ENCODE measurements at regions of chr7 and their contacts with region 1.

Region 1: DNA sequence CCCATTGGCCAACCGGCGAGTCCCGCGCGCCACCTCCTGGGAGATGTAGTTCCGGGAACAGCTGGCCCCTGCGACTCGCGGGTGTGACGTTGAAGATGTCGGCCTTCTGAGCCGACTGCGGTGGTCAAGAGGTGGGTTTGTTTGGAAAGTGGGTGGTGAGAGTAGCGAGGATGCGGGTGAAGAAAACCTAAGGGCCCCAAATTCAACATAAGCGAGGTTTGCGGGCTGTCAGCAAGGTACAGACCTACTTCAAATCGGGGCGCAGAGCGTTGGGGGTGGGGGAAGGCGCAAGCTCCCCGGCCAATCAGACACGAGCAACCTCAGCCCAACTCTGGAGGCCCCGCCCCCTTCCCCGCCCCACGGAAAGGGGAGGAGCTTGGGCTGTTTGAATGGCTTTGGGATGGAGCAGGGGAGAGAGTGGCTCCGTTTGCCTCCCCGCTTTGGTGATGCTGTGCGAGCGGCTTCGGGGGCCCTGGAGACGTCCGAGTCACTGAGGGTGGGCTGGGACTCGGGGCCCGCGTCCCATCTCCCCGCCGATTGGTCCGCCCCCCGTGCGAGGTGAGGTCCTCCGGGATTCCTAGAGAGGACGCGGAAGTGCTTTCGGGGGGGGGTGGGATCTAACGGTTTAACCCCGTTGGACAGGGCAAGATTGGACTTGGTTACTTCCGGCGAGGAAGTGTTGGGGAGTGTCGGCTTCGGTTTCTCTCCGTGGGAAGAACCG is at the start of gene ZKSCAN5:
- DNase-seq: peak; percentile 97
- H3K4me3 Mint-ChIP-seq: peak within 1 kb of the TSS; percentile 88
- H3K27ac Mint-ChIP-seq: peak within 1 kb of the TSS; percentile 96
- H3K4me1 Mint-ChIP-seq: peaks cover 33% of the 10 kb centered on the region
- H3K27me3 Mint-ChIP-seq: no peaks in the 10 kb centered on the region
- total RNA-seq, gene ZKSCAN5: 12.0 to 12.2 TPM

Region 2: DNA sequence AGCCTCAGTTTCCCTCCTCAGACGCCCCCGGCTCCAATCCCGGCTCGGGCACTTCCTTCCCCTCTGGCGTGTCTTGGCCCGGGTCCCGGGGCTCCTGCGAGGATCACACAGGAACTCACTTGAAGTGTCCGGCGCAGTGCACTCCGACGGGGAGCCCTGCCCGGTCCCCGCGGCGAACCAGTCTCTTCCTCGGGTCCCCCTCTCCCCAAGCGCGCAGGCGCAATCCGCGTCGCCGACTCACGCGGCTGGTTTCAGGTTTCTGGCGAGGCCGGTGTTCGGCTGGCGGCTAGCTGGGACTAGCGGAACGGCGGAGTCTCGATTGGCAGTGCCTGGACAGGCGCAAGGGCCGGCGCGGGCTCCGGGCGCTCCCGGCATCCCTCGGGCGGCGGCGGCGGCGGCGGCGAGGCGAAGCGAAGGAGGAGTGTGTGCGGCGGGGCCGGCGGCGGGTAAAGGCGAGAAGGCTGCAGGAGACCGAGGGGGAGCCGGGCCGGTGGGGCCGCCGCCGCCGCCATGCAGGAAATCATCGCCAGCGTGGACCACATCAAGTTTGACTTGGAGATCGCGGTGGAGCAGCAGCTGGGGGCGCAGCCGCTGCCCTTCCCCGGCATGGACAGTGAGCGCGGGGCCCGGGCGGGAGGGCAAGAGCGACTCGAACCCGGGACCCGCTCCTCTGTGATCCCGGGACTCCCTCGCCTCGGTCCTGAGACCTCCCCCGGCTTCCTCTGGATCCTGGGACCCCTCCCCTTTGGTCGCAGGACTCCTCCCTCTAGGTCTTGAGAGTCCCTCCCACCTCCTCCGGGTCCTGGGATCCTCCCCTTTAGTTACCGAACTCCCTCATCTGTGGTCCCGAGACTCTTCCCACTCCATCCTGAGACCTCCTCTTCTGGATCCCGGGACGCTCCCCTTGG is 65.9 kb before region 1 on chr7 and contains the starts of genes CPSF4 and PTCD1:
- CTCF ChIA-PET with region 1: no interaction called
- POLR2A ChIA-PET with region 1: interaction called, 12 read pairs
- DNase-seq: peak; percentile 92
- H3K4me3 Mint-ChIP-seq: peak within 1 kb of the TSS; percentile 98
- H3K27ac Mint-ChIP-seq: peak within 1 kb of the TSS; percentile 86
- H3K4me1 Mint-ChIP-seq: peaks cover 45% of the 10 kb centered on the region
- H3K27me3 Mint-ChIP-seq: no peaks in the 10 kb centered on the region
- total RNA-seq, gene CPSF4: 64.1 to 66.2 TPM
- total RNA-seq, gene PTCD1: 6.6 to 7.5 TPM

Region 3: GRCh38 chr7:99472561-99473243 is 32.1 kb before region 1 on chr7 and contains the start of gene ZNF789:
- CTCF ChIA-PET with region 1: interaction called, 7 read pairs
- POLR2A ChIA-PET with region 1: interaction called, 23 read pairs
- DNase-seq: peak; percentile 99
- H3K4me3 Mint-ChIP-seq: peak within 1 kb of the TSS; percentile 93
- H3K27ac Mint-ChIP-seq: peak within 1 kb of the TSS; percentile 88
- H3K4me1 Mint-ChIP-seq: peaks cover 39% of the 10 kb centered on the region
- H3K27me3 Mint-ChIP-seq: peaks cover 4% of the 10 kb centered on the region
- total RNA-seq, gene ZNF789: 19.4 to 21.8 TPM

Region 4: GRCh38 chr7:99616359-99617191 is 111.8 kb after region 1 on chr7 and contains the start of gene ZSCAN25:
- CTCF ChIA-PET with region 1: interaction called, 3 read pairs
- POLR2A ChIA-PET with region 1: interaction called, 21 read pairs
- DNase-seq: peak; percentile 87
- H3K4me3 Mint-ChIP-seq: peak within 1 kb of the TSS; percentile 89
- H3K27ac Mint-ChIP-seq: peak within 1 kb of the TSS; percentile 86
- H3K4me1 Mint-ChIP-seq: peaks cover 53% of the 10 kb centered on the region
- H3K27me3 Mint-ChIP-seq: peaks cover 2% of the 10 kb centered on the region
- total RNA-seq, gene ZSCAN25: 27.7 TPM